Dendritic cell treated with granulocyte-macrophage colony-stimulating factor and Interleukin-4, amounts not matched to agents 40 ng/mL and 50 ng/mL, for 4 days (primary cell): ENCODE measurements at regions of chr2 and their contacts with region 1.

Region 1: GRCh38 chr2:36785179-36785795 is 88.8 kb downstream of the VIT start:
- H3K4me3 Mint-ChIP-seq: no peak overlapping the region
- H3K27ac Mint-ChIP-seq: no peak overlapping the region
- H3K4me1 Mint-ChIP-seq: peaks cover 18% of the 10 kb centered on the region
- H3K27me3 Mint-ChIP-seq: no peaks in the 10 kb centered on the region

Region 2: DNA sequence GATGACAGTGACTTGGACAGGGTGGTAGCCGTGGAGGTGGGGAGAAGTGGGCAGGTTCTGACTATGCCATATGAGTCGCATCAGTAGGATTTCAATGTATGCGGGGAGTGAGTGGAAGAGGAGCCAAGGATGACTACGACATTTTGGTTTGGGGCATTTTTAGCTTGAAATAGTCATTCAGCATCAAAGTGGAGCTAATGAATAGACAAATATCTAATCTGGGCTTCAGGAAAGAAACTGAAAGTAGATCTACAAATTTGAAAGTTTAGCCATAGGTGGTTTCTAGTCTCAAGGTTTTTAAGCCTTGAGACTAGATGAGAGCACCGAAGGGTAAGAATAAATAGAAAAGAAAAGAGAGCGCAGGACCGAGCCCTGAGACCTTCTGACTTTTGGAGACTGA is 245.7 kb before region 1 on chr2:
- intact Hi-C with region 1: no loop called
- H3K4me3 Mint-ChIP-seq: no peak overlapping the region
- H3K27ac Mint-ChIP-seq: no peak overlapping the region
- H3K4me1 Mint-ChIP-seq: peaks cover 23% of the 10 kb centered on the region
- H3K27me3 Mint-ChIP-seq: no peaks in the 10 kb centered on the region

Region 3: DNA sequence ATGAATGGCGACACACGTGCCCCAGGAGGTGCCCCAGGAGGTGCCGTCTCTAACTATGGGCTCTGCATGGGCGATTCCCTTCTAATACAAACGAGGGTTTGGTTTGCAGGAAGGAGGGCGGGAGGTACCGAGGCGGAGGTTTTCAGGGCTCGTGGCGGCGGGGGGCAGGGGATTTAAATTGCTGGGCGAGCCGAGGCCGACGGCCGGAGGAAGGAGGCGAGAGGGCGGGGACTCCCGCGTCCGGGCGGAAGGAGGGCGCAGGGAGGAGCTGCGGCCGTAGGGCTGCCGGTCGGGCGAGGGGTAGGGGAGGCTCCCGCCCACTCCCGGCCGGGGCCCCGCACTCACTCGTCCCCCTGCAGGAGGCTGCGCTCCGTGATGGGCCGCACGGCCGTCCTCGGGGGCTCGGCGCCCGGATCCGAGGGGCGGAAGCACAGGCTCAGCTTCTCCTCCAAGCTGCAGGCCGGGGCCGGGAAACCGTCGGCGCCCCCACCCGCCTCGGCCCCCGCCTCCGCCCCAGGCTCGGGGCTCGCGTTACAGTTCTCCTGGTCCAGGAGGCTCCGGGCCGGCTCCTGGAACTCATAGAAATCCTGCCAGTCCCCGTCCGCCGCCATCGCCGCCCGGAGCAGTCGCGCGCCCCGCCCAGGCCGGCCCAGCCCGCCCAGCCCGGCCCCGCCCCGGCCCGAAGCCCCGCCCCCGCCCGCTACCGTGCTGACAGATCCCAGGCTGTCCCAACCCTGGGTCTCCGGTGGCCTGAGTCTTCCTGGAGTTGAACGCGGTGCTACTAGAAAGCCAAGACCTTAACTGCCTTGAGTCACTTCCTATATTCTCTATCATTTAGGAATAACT is 187.5 kb before region 1 on chr2 and contains the start of gene FEZ2:
- intact Hi-C with region 1: no loop called
- H3K4me3 Mint-ChIP-seq: peak within 1 kb of the TSS; percentile 89
- H3K27ac Mint-ChIP-seq: peak within 1 kb of the TSS; percentile 82
- H3K4me1 Mint-ChIP-seq: peaks cover 39% of the 10 kb centered on the region
- H3K27me3 Mint-ChIP-seq: no peaks in the 10 kb centered on the region

Region 4: DNA sequence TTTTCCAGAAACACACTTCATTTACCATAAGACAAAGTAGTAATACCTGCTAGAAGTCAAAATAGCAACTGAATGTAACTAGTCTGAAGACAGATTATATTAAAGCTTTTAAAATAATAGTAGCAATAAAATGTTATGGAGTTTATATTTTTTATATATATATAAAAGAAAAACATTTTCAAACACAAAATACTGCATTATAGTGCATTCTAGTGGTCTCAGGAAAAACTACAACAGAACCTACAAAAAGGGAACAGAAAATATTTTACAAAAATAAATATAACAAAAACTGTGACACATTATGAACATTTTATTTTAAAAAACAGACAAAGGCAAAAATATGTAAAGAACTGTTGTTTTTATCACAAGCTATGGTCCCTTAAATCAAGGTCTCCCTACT is 133.0 kb after region 1 on chr2:
- intact Hi-C with region 1: loop called (anchors 5 kb)
- H3K4me3 Mint-ChIP-seq: no peak overlapping the region
- H3K27ac Mint-ChIP-seq: no peak overlapping the region
- H3K4me1 Mint-ChIP-seq: peaks cover 19% of the 10 kb centered on the region
- H3K27me3 Mint-ChIP-seq: no peaks in the 10 kb centered on the region

Region 5: GRCh38 chr2:37005118-37005868 is 220.0 kb after region 1 on chr2:
- intact Hi-C with region 1: loop called (anchors 5 kb)
- H3K4me3 Mint-ChIP-seq: no peak overlapping the region
- H3K27ac Mint-ChIP-seq: no peak overlapping the region
- H3K4me1 Mint-ChIP-seq: peaks cover 6% of the 10 kb centered on the region
- H3K27me3 Mint-ChIP-seq: no peaks in the 10 kb centered on the region

Region 6: DNA sequence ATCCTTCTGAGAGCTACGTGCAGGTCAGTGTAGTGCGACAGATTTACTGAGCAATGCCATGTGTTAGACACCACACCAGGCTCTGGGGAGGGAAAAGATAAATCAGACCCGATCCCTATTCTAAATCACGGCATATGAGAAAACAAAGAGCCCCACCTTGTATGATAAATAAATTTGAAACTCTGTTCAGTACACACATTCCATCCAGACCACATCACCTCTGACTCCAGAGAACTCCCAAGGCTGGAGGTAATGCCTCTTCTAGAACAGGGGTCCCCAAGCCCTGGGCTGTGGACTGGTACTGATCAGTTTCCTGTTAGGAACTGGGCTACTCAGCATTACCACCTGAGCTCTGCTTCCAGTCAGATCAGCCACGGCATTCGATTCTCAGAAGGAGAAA is 636.4 kb after region 1 on chr2:
- intact Hi-C with region 1: no loop called
- H3K4me3 Mint-ChIP-seq: no peak overlapping the region
- H3K27ac Mint-ChIP-seq: no peak overlapping the region
- H3K4me1 Mint-ChIP-seq: no peaks in the 10 kb centered on the region
- H3K27me3 Mint-ChIP-seq: no peaks in the 10 kb centered on the region